Activated CD8-positive, alpha-beta T cell treated with anti-CD3 and anti-CD28 coated beads for 36 hours (primary cell): ENCODE measurements at regions of chr5 and their contacts with region 1.

Region 1: GRCh38 chr5:36695677-36696673 is 89.6 kb downstream of the SLC1A3 start:
- DNase-seq: peak; percentile 68
- ATAC-seq: peak; percentile 76
- H3K4me3 Mint-ChIP-seq: no peak overlapping the region
- H3K27ac Mint-ChIP-seq: no peak overlapping the region
- H3K4me1 Mint-ChIP-seq: no peaks in the 10 kb centered on the region
- H3K27me3 Mint-ChIP-seq: peaks cover 24% of the 10 kb centered on the region
- CTCF ChIP-seq: peak; percentile 58

Region 2: DNA sequence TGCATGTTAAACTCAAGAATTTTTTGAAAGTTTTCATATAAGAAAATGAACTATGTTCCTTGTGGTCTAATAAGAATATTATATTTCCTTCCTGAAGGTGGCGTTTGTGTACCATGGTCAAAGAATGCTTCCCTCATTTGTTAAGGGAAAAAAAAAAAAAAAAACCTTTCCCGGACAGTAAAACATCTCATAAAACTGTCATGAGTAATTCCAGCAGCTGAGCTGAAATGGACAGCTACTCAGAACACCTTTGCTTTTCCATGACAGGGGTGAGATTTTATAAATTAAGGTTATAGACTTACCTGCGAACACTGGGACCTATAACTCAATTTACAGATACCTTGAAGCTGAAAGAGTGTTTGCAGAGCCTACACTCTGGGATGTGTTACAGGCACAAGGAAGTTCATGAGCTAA is 281.1 kb before region 1 on chr5:
- CTCF ChIA-PET with region 1: interaction called, 7 read pairs
- POLR2A ChIA-PET with region 1: no interaction called
- intact Hi-C with region 1: loop called (anchors 2 kb)
- DNase-seq: no peak
- ATAC-seq: no peak
- H3K4me3 Mint-ChIP-seq: no peak overlapping the region
- H3K27ac Mint-ChIP-seq: no peak overlapping the region
- H3K4me1 Mint-ChIP-seq: peaks cover 3% of the 10 kb centered on the region
- H3K27me3 Mint-ChIP-seq: no peaks in the 10 kb centered on the region
- CTCF ChIP-seq: no peak

Region 3: DNA sequence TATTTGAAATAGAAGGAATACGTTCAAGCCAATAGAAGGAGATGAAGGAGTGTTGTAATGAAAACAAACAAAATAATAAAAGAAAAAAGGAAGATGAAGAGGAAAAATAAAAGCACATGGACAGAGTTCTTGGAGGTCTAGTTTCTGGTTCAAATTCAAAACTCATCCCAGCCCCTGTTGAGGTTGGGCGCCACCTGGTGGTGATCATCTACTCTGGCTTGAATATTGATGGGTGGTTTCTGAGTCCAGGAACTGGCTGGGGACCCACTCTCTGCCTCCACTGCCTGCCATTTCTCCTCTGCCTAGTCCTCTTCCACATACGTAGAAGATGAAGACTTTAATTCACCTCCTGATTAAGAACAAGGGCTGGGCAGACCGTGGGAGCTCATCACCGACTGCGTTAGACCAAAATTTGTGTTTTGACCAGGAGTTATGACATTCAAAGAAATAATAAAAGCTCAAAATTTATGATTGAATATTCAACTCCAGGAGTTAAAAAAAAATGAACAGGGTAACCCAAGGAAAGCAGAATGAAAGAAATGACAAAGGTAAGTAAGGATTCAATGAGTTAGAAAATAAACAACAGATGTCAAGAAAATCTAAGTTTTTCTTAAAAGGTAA is 188.5 kb before region 1 on chr5:
- CTCF ChIA-PET with region 1: interaction called, 15 read pairs
- POLR2A ChIA-PET with region 1: no interaction called
- intact Hi-C with region 1: no loop called
- DNase-seq: peak; percentile 86
- ATAC-seq: no peak
- H3K4me3 Mint-ChIP-seq: no peak overlapping the region
- H3K27ac Mint-ChIP-seq: no peak overlapping the region
- H3K4me1 Mint-ChIP-seq: no peaks in the 10 kb centered on the region
- H3K27me3 Mint-ChIP-seq: peaks cover 7% of the 10 kb centered on the region
- CTCF ChIP-seq: peak; percentile 85

Region 4: DNA sequence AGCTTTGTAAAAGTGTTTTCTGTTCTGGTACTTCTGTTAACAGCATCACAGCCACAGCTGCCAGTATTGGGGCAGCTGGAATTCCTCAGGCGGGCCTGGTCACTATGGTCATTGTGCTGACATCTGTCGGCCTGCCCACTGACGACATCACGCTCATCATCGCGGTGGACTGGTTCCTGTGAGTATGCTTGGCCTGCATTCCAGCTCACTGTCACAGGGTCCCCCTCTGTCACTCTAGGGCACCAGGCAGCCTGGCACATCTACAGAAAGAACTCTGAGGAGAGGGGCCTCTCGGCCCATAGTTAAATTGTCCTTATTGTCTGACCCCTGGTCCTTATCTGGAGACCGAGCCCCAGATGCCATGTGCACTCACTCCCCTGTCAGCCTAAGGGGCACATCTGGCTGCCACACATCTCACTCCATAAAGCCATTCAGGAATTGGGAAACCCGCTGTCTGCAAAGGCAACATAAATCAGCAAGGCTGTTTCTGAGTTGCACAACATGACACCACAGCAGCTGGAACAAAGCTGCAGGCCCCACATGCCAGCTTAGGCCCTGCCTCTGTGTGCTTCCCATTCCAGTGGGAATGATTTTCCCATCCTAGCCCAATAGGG is 12.0 kb before region 1 on chr5:
- CTCF ChIA-PET with region 1: interaction called, 19 read pairs
- POLR2A ChIA-PET with region 1: interaction called, 3 read pairs
- intact Hi-C with region 1: no loop called
- DNase-seq: no peak
- ATAC-seq: no peak
- H3K4me3 Mint-ChIP-seq: no peak overlapping the region
- H3K27ac Mint-ChIP-seq: no peak overlapping the region
- H3K4me1 Mint-ChIP-seq: peaks cover 3% of the 10 kb centered on the region
- H3K27me3 Mint-ChIP-seq: peaks cover 6% of the 10 kb centered on the region
- CTCF ChIP-seq: no peak